Dorsolateral prefrontal cortex (tissue), 120 donors: ENCODE measurements at regions of chr7 and their contacts with region 1.

Region 1: DNA sequence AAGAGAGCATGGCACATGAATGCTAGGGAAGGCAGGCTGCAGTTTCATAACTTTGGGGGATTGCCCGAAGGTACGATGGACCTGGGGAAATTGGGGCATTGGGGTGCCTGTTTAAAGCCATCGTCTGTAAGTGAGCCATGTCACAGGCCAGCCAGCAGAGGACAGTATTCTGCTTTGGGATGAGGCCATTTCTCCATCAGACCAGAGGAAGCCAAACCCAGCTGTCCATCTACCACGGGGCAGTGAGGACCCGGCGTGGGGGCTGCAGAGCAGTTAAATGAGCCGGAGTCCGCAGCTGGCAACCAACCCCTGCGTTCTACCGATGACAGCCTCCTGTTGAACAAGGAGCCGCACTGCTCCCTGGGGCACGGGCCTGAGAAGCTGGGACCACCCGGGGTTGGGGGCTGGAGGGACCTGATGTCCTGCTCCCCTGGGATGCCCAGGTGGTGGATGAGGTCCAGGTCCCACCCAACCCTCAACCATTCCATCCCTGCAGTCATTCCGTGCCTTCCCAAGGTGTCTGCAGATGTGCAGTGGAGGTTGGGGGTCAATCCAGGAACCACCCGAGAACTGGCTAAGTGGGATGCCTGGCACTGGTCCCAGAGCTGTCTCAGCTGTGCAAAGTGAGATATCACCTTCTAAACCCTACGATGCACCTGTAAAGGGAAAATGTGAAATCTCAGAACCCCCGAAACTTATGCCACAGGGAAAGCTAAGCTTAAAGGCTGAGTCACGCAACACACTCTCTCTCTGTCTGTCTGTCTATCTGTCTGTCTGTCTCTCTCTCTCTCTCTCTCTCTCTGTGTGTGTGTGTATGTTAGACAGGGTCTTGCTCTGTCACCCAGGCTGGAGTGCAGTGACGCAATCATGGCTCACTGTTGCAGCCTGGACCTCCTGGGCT is 12.1 kb upstream of the RHBDD2 start:
- DNase-seq: peak in 8 of 10 donors; percentile 39 to 69 (median 62)
- H3K4me3 ChIP-seq: peak overlapping the region in 3 of 59 donors; percentile 6 to 22 (median 13)
- H3K27ac ChIP-seq: no peak overlapping the region
- H3K27me3 ChIP-seq: no peaks in the 10 kb centered on the region
- CTCF ChIP-seq: peak; percentile 51 to 94 (median 86)

Region 2: DNA sequence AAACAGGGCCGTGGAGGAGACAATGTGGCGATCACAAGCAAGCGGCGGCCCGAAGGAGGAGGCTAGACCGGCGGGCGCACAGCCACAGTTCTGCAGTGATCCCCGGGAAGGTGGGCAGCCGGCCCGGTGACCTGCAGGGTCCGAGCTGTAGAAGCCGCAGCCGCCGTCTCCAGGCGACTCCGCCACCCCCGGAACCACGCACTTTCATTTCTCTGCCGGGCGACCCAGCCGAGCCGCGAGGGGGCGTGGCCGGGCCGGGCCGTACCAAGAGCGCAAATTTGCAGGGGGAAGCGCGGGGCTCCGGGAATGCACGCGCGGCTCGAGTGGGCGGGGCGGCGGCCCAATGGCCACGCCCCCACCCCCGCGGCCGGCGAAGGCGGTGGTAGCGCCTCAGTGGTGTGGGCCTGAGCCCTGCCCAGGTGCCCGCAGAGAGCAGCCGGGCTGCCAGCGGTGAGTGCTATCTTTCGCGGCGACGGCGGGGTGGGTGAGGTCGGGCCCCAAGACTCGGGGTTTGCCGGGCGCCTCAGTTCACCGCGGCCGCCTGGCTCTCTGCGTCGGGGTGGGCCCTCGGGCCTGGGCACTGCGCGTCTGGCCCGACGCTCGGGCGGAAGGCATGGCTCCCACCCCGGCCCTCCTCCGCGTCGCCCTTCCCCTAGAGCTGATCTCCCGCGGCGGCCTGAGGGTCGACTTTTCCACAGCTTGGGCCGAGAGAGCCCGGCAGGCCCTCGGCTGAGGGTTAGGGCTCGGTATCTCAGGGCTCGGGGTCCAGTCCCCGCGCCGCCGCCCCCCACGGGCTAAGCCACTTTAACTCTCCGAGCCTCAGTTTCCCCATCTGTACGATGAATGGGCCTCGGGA is 48.2 kb after region 1 on chr7 and contains the start of gene POR:
- intact Hi-C with region 1: no loop called
- DNase-seq: peak; percentile 92 to 99 (median 95)
- H3K4me3 ChIP-seq: peak within 1 kb of the TSS; percentile 60 to 100 (median 97)
- H3K27ac ChIP-seq: peak within 1 kb of the TSS; percentile 9 to 97 (median 91)
- H3K27me3 ChIP-seq: no peaks in the 10 kb centered on the region
- CTCF ChIP-seq: peak in 53 of 56 donors; percentile 12 to 73 (median 46)
- total RNA-seq, gene POR: 52.3 to 111 (median 78.1) TPM

Region 3: DNA sequence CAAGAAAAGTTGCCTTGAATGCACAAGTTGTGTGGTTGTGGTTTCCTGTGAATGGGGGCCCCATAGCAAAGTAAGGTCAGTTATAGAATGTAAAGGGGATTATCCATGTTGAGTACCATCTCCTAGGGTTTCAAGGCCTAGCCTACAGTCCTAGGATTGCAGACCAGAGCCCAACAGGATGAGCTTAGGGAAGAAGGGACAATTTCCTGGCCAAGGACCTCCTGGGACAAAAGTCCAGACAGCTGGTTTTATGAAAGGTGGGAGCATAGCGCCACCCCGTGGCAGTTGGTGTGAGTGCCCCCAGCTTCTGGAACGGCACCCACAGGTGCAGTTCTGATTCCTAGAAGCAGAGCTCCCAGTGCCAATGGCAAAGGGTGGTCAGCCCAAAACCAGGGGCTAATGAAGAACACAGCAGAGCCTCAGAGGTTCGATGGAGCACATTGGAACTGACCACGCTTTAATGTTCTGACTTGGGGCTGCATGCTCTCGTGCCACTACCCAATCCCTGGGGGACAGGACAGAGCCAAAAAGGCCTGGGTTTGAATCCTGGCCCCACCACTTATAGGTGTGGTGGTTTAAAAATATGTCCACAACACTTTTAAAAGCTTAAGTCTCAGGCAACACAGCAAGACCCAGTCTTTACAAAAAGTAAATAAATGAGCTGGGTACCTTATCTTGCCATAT is 153.4 kb after region 1 on chr7:
- intact Hi-C with region 1: loop called (anchors 1 to 5 kb)
- DNase-seq: peak; percentile 56 to 81 (median 70)
- H3K4me3 ChIP-seq: no peak overlapping the region
- H3K27ac ChIP-seq: no peak overlapping the region
- H3K27me3 ChIP-seq: no peaks in the 10 kb centered on the region
- CTCF ChIP-seq: peak; percentile 82 to 97 (median 91)

Region 4: DNA sequence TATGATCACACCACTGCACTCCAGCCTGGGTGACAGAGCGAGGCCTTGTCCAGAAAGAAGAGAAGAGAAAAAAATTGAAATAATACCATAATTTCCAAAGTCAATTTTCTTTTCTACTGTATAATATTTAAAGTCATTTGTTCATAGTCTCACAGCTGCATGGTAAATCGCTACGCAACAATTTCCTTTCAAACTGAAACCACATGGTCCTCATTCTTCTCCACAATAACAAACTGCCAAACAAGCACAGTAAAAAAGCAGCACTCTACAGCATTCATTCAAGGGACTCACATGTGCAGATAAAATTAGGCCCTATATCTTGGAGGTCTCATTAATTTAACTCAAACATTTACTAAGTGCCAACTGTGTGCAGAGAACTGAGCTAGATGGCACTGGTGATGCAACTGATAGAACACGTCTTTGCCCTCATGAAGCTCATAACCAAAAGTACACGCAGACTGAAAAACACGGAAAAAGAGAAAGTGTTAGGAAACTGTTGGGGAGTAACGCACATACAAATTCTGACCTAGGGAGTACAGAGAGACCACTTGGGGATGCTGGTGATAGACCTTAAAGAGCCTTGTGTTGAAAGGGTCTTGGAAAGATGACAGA is 266.5 kb after region 1 on chr7:
- intact Hi-C with region 1: loop called in 1 of 2 experiments (anchors 10 kb)
- DNase-seq: no peak
- H3K4me3 ChIP-seq: no peak overlapping the region
- H3K27ac ChIP-seq: no peak overlapping the region
- H3K27me3 ChIP-seq: no peaks in the 10 kb centered on the region
- CTCF ChIP-seq: no peak

Region 5: GRCh38 chr7:77368974-77369373 is 1502.2 kb after region 1 on chr7:
- intact Hi-C with region 1: no loop called
- DNase-seq: no peak
- H3K4me3 ChIP-seq: no peak overlapping the region
- H3K27ac ChIP-seq: no peak overlapping the region
- H3K27me3 ChIP-seq: no peaks in the 10 kb centered on the region
- CTCF ChIP-seq: peak in 2 of 56 donors; percentile 13 to 21